ENCODE measurements at regions of chr14 and their contacts with region 1.

Region 1: GRCh38 chr14:95713596-95714371 is at the start of gene TCL1A:
- DNase-seq: peak; percentile 66
- ATAC-seq: peak; percentile 76
- H3K4me3 Mint-ChIP-seq: peak within 1 kb of the TSS; percentile 94
- H3K27ac Mint-ChIP-seq: peak within 1 kb of the TSS; percentile 97
- H3K4me1 Mint-ChIP-seq: peaks cover 80% of the 10 kb centered on the region
- H3K27me3 Mint-ChIP-seq: peaks cover 23% of the 10 kb centered on the region
- CTCF ChIP-seq: no peak
- total RNA-seq, gene TCL1A: 228 and 234 TPM in 2 replicates

Region 2: GRCh38 chr14:95442633-95443021 is 271.2 kb before region 1 on chr14:
- CTCF ChIA-PET with region 1: no interaction called
- POLR2A ChIA-PET with region 1: no interaction called
- intact Hi-C with region 1: loop called (anchors 10 kb)
- DNase-seq: peak; percentile 55
- ATAC-seq: peak; percentile 91
- H3K4me3 Mint-ChIP-seq: no peak overlapping the region
- H3K27ac Mint-ChIP-seq: peak overlapping the region; percentile 78
- H3K4me1 Mint-ChIP-seq: peaks cover 34% of the 10 kb centered on the region
- H3K27me3 Mint-ChIP-seq: no peaks in the 10 kb centered on the region
- CTCF ChIP-seq: no peak

Region 3: DNA sequence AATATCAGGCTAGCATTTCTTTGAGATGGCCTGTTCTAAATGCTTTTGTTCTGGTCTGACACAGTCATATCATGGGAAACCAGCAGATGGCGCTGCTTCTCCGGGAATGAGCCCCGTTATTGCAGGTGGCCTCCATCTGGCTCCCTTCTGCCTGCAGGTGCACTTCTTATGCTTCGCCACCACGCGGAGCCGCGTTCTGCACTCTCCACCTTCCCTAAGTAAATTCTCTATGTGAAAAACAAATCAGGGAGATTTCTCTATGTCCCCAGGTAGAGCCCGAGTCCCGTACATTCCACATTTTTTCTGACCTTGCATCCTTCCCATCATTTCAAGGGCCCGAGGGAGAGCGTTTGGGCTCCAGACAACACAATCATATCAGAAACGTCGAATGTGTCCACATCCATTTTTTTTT is 152.8 kb before region 1 on chr14:
- CTCF ChIA-PET with region 1: no interaction called
- POLR2A ChIA-PET with region 1: no interaction called
- intact Hi-C with region 1: loop called (anchors 1 kb)
- DNase-seq: peak; percentile 79
- ATAC-seq: peak; percentile 100
- H3K4me3 Mint-ChIP-seq: no peak overlapping the region
- H3K27ac Mint-ChIP-seq: no peak overlapping the region
- H3K4me1 Mint-ChIP-seq: peaks cover 4% of the 10 kb centered on the region
- H3K27me3 Mint-ChIP-seq: peaks cover 17% of the 10 kb centered on the region
- CTCF ChIP-seq: peak; percentile 71

Region 4: DNA sequence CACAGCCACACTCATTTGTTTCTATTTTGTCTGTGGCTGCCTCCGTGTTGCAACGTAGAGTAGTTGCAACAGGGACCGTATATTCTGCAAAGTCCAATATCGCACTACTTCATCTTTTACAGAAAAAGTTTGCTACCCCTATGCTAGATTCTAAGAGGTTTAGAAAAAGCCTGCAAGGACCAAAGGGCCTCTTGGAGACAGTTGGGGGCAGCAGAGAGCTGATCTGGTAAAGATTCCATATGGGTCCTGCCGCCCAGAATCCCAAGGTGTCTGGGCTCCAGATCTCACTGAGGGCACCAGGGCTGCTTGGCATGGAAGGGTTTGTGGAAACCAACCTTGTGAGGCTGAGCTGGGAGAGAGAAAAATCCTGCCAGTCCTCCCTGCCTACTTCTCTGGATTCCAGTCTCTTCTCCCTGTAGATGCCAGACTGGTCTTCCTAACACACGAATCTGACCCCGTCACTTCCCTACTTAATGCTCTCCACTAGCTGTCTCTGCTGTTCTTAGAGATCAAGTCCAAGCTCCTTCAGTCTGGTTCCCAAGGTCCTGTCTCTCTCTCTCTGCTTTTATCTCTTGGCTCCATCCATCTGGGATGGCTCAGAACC is 104.3 kb before region 1 on chr14:
- CTCF ChIA-PET with region 1: interaction called, 4 read pairs
- POLR2A ChIA-PET with region 1: interaction called, 4 read pairs
- intact Hi-C with region 1: loop called (anchors 1 kb)
- DNase-seq: no peak
- ATAC-seq: peak; percentile 34
- H3K4me3 Mint-ChIP-seq: no peak overlapping the region
- H3K27ac Mint-ChIP-seq: no peak overlapping the region
- H3K4me1 Mint-ChIP-seq: peaks cover 24% of the 10 kb centered on the region
- H3K27me3 Mint-ChIP-seq: peaks cover 32% of the 10 kb centered on the region
- CTCF ChIP-seq: no peak

Region 5: GRCh38 chr14:95697764-95698163 is 16.0 kb before region 1 on chr14:
- CTCF ChIA-PET with region 1: interaction called, 9 read pairs
- POLR2A ChIA-PET with region 1: interaction called, 116 read pairs
- intact Hi-C with region 1: loop called (anchors 2 kb)
- DNase-seq: no peak
- ATAC-seq: peak; percentile 64
- H3K4me3 Mint-ChIP-seq: peak overlapping the region; percentile 74
- H3K27ac Mint-ChIP-seq: peak overlapping the region; percentile 94
- H3K4me1 Mint-ChIP-seq: peaks cover 96% of the 10 kb centered on the region
- H3K27me3 Mint-ChIP-seq: peaks cover 6% of the 10 kb centered on the region
- CTCF ChIP-seq: no peak

Region 6: DNA sequence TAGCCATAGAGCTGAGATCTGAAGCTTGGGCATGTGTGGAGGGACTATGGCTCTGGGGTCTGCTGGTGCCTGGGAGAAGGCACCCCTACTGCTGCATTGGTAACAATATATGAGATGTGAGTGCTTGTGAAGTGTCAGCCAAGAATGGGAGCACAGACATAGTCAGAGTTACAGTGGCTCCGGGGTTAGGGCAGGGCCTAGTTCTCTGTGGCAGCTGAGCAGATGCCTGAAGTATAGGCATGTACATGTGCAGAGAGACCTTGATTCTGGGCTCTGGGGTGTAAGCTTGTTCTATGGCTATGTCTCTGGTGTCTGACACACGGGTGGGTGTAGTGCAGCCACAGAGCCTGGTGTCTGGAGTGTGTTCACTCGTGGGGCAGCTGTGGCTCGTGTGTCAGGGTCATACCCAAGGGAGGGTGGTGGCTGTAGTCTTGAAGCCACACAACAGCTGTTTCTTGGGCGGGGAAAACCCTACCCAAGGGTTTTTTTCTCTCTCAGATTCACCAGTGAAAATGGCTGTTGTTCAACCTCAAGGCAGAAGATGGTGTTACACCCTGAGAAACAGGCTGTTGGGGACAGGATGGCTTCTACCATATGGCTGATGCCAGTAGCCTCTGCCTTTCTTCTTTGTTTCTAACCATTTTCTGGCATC is 12.0 kb after region 1 on chr14:
- CTCF ChIA-PET with region 1: interaction called, 9 read pairs
- POLR2A ChIA-PET with region 1: interaction called, 57 read pairs
- intact Hi-C with region 1: loop called (anchors 1 kb)
- DNase-seq: no peak
- ATAC-seq: peak; percentile 81
- H3K4me3 Mint-ChIP-seq: peak overlapping the region; percentile 68
- H3K27ac Mint-ChIP-seq: peak overlapping the region; percentile 83
- H3K4me1 Mint-ChIP-seq: peaks cover 80% of the 10 kb centered on the region
- H3K27me3 Mint-ChIP-seq: peaks cover 24% of the 10 kb centered on the region
- CTCF ChIP-seq: no peak

Region 7: GRCh38 chr14:96297000-96297399 is 583.2 kb after region 1 on chr14:
- CTCF ChIA-PET with region 1: no interaction called
- POLR2A ChIA-PET with region 1: no interaction called
- intact Hi-C with region 1: no loop called
- DNase-seq: no peak
- ATAC-seq: no peak
- H3K4me3 Mint-ChIP-seq: no peak overlapping the region
- H3K27ac Mint-ChIP-seq: no peak overlapping the region
- H3K4me1 Mint-ChIP-seq: no peaks in the 10 kb centered on the region
- H3K27me3 Mint-ChIP-seq: no peaks in the 10 kb centered on the region
- CTCF ChIP-seq: no peak

Region 8: GRCh38 chr14:96648506-96649326 is 934.9 kb after region 1 on chr14:
- CTCF ChIA-PET with region 1: no interaction called
- POLR2A ChIA-PET with region 1: no interaction called
- intact Hi-C with region 1: no loop called
- DNase-seq: no peak
- ATAC-seq: no peak
- H3K4me3 Mint-ChIP-seq: no peak overlapping the region
- H3K27ac Mint-ChIP-seq: no peak overlapping the region
- H3K4me1 Mint-ChIP-seq: no peaks in the 10 kb centered on the region
- H3K27me3 Mint-ChIP-seq: peaks cover 12% of the 10 kb centered on the region
- CTCF ChIP-seq: no peak